Heart left ventricle (tissue), 16 donors: ENCODE measurements at regions of chr13 and their contacts with region 1.

Region 1: GRCh38 chr13:52399708-52400107 is 6.3 kb downstream of the THSD1 start:
- DNase-seq: no peak
- ATAC-seq: peak in 2 of 4 donors; percentile 36 to 61
- H3K4me3 ChIP-seq: no peak overlapping the region
- H3K27ac ChIP-seq: no peak overlapping the region
- H3K4me1 ChIP-seq: peaks cover 0 to 45% (median 14%) of the 10 kb centered on the region in 12 donors
- H3K27me3 ChIP-seq: no peaks in the 10 kb centered on the region
- CTCF ChIP-seq: peak in 7 of 12 donors; percentile 18 to 33 (median 23)
- POLR2A ChIP-seq: no peak

Region 2: GRCh38 chr13:52348983-52349780 is 50.5 kb before region 1 on chr13:
- intact Hi-C with region 1: loop called in 1 of 10 experiments (anchors 10 kb)
- DNase-seq: no peak
- ATAC-seq: no peak
- H3K4me3 ChIP-seq: no peak overlapping the region
- H3K27ac ChIP-seq: no peak overlapping the region
- H3K4me1 ChIP-seq: peaks cover 0 to 4% (median 0%) of the 10 kb centered on the region in 12 donors
- H3K27me3 ChIP-seq: no peaks in the 10 kb centered on the region
- CTCF ChIP-seq: no peak
- POLR2A ChIP-seq: no peak

Region 3: GRCh38 chr13:52461265-52461664 is 61.6 kb after region 1 on chr13:
- intact Hi-C with region 1: no loop called
- DNase-seq: no peak
- ATAC-seq: no peak
- H3K4me3 ChIP-seq: no peak overlapping the region
- H3K27ac ChIP-seq: no peak overlapping the region
- H3K4me1 ChIP-seq: peaks cover 0 to 12% (median 3%) of the 10 kb centered on the region in 12 donors
- H3K27me3 ChIP-seq: no peaks in the 10 kb centered on the region
- CTCF ChIP-seq: no peak
- POLR2A ChIP-seq: no peak